CD8-positive, alpha-beta T cell (primary cell): ENCODE measurements at regions of chr19 and their contacts with region 1.

Region 1: DNA sequence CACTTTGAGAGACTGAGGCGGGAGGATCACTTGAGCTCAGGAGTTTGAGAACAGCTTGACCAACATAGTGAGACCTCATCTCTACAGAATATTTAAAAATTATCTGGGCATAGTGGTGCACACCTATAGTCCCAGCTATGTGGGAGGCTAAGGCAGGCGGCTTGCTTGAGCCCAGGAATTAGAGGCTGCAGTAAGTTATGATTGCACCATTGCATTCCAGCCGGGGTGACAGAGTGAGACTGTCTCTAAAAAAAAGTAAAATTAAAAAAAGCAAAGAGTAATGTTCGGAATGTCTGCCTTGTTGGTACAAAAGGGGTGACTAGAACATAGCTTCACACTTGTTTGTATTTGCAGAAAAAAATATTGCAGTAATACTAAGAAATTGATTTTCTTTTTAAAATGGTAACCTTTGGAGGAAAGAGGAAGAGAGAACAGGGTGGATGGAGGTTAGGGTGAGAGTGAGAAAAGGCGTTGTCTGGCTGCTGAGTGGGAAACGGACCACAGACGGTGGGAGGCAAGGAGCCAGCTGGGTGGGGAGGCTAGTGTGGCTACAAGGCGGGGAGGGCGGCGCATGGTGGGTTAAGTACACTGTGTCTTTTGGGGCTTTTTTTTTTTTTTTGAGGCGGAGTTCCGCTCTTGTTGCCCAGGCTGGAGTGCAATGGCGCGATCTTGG is 10.2 kb downstream of the PPP1R14A start:
- DNase-seq: no peak
- ATAC-seq: no peak
- H3K4me3 ChIP-seq: no peak overlapping the region
- H3K4me3 Mint-ChIP-seq: no peak overlapping the region
- H3K27ac ChIP-seq: no peak overlapping the region
- H3K27ac Mint-ChIP-seq: no peak overlapping the region
- H3K4me1 ChIP-seq: no peaks in the 10 kb centered on the region
- H3K4me1 Mint-ChIP-seq: peaks cover 4% of the 10 kb centered on the region
- H3K27me3 ChIP-seq: no peaks in the 10 kb centered on the region
- H3K27me3 Mint-ChIP-seq: peaks cover 5% of the 10 kb centered on the region
- CTCF ChIP-seq: no peak

Region 2: DNA sequence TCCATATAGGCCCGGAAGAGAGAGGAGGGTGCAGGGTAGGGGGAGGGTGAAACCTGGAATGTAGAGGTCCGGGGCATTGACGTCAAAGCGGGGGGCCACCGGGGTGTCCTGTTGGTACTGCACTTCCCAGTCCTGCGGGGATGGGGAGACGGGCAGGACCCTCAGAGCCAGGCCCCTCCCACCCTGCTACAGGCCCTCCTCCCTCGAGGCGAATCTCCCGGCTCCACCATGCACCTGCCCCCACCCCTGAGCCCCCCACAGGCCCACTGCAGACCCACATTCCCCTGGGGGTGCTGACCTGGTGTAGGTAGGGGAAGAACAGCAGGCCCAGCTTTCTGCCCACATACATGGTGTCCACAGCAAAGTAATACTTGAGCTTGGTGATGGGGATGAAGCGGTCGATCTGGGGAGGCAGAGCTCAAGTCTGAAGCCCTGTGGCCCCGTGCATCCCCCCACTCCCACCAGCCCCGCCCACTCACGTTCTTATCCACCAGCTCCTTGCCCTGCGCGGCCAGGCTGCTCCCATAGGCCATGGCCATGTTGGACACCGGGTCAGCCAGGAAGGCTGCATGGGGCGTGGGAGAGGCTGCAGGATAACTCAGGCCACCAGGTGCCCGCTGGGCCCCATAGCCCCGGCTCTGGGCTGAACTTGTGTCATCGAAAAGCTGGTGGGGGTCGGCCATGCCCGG is 63.1 kb after region 1 on chr19:
- CTCF ChIA-PET with region 1: interaction called, 10 read pairs
- POLR2A ChIA-PET with region 1: no interaction called
- intact Hi-C with region 1: no loop called
- DNase-seq: no peak
- ATAC-seq: no peak
- H3K4me3 ChIP-seq: no peak overlapping the region
- H3K4me3 Mint-ChIP-seq: no peak overlapping the region
- H3K27ac ChIP-seq: no peak overlapping the region
- H3K27ac Mint-ChIP-seq: no peak overlapping the region
- H3K4me1 ChIP-seq: no peaks in the 10 kb centered on the region
- H3K4me1 Mint-ChIP-seq: peaks cover 8% of the 10 kb centered on the region
- H3K27me3 ChIP-seq: no peaks in the 10 kb centered on the region
- H3K27me3 Mint-ChIP-seq: no peaks in the 10 kb centered on the region
- CTCF ChIP-seq: no peak

Region 3: GRCh38 chr19:38315657-38316476 is 69.9 kb after region 1 on chr19 and contains the start of gene YIF1B:
- CTCF ChIA-PET with region 1: interaction called, 10 read pairs
- POLR2A ChIA-PET with region 1: no interaction called
- intact Hi-C with region 1: loop called in 1 of 2 experiments (anchors 1 kb)
- DNase-seq: peak; percentile 91 to 98 (median 94)
- ATAC-seq: peak; percentile 92
- H3K4me3 ChIP-seq: peak within 1 kb of the TSS; percentile 60 to 68
- H3K4me3 Mint-ChIP-seq: peak within 1 kb of the TSS; percentile 86
- H3K27ac ChIP-seq: peak within 1 kb of the TSS; percentile 93 to 95
- H3K27ac Mint-ChIP-seq: peak within 1 kb of the TSS; percentile 95
- H3K4me1 ChIP-seq: peaks cover 34% of the 10 kb centered on the region
- H3K4me1 Mint-ChIP-seq: peaks cover 52% of the 10 kb centered on the region
- H3K27me3 ChIP-seq: peaks cover 0 to 2% of the 10 kb centered on the region in 2 experiments
- H3K27me3 Mint-ChIP-seq: no peaks in the 10 kb centered on the region
- CTCF ChIP-seq: no peak
- total RNA-seq, gene YIF1B: 12.0 to 13.0 TPM

Region 4: GRCh38 chr19:38402967-38403861 is 157.3 kb after region 1 on chr19 and contains the start of gene FAM98C:
- CTCF ChIA-PET with region 1: interaction called, 5 read pairs
- POLR2A ChIA-PET with region 1: no interaction called
- intact Hi-C with region 1: loop called in 1 of 2 experiments (anchors 1 kb)
- DNase-seq: peak; percentile 95 to 99 (median 97)
- ATAC-seq: peak; percentile 96
- H3K4me3 ChIP-seq: peak within 1 kb of the TSS; percentile 76 to 95
- H3K4me3 Mint-ChIP-seq: peak within 1 kb of the TSS; percentile 94
- H3K27ac ChIP-seq: peak within 1 kb of the TSS; percentile 79 to 81
- H3K27ac Mint-ChIP-seq: peak within 1 kb of the TSS; percentile 98
- H3K4me1 ChIP-seq: peaks cover 11% of the 10 kb centered on the region
- H3K4me1 Mint-ChIP-seq: peaks cover 15% of the 10 kb centered on the region
- H3K27me3 ChIP-seq: no peaks in the 10 kb centered on the region
- H3K27me3 Mint-ChIP-seq: no peaks in the 10 kb centered on the region
- CTCF ChIP-seq: peak; percentile 95
- total RNA-seq, gene FAM98C: 28.2 to 29.3 TPM